Dendritic cell treated with granulocyte-macrophage colony-stimulating factor and Interleukin-4, amounts not matched to agents 40 ng/mL and 50 ng/mL, for 4 days (primary cell): ENCODE measurements at regions of chr10 and their contacts with region 1.

Region 1: GRCh38 chr10:101272229-101272868 is 43.1 kb upstream of the LBX1 start:
- H3K4me3 Mint-ChIP-seq: no peak overlapping the region
- H3K27ac Mint-ChIP-seq: no peak overlapping the region
- H3K4me1 Mint-ChIP-seq: peaks cover 4% of the 10 kb centered on the region
- H3K27me3 Mint-ChIP-seq: peaks cover 46% of the 10 kb centered on the region

Region 2: GRCh38 chr10:101441541-101442455 is 169.4 kb after region 1 on chr10:
- intact Hi-C with region 1: loop called (anchors 1 kb)
- H3K4me3 Mint-ChIP-seq: no peak overlapping the region
- H3K27ac Mint-ChIP-seq: no peak overlapping the region
- H3K4me1 Mint-ChIP-seq: peaks cover 6% of the 10 kb centered on the region
- H3K27me3 Mint-ChIP-seq: no peaks in the 10 kb centered on the region

Region 3: GRCh38 chr10:101569838-101570766 is 297.8 kb after region 1 on chr10:
- intact Hi-C with region 1: loop called (anchors 1 kb)
- H3K4me3 Mint-ChIP-seq: peak overlapping the region; percentile 77
- H3K27ac Mint-ChIP-seq: peak overlapping the region; percentile 69
- H3K4me1 Mint-ChIP-seq: peaks cover 25% of the 10 kb centered on the region
- H3K27me3 Mint-ChIP-seq: peaks cover 49% of the 10 kb centered on the region